ENCODE measurements at regions of chr21 and their contacts with region 1.

Region 1: DNA sequence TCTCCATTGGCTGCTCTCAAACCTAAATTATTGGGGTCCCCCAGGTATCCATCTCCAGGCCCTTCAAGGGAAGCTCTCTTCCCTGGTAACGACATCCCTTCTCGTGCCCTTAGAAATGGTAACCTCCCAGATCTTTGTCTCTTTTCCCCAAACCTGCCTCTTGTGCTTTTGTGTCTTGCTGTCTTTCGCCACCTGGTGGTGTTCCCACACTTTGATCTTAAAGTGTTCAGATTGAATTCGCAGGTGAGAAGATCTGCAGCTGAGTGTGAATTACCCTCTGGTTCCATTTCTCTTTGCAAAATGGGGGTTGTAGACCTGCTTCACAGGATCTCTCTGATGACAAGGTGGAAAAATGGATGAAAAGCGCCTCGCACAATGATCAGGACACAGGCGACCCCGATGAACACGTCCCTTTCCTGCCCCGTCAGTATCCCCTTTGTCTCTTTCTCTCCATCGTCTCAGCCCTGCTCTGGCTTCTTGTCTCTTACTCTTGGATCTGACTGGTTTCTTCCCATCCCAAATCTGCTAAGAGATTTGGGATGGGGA is 53.1 kb downstream of the DOP1B start:
- DNase-seq: no peak
- H3K4me3 ChIP-seq: no peak overlapping the region
- CTCF ChIP-seq: peak; percentile 48

Region 2: DNA sequence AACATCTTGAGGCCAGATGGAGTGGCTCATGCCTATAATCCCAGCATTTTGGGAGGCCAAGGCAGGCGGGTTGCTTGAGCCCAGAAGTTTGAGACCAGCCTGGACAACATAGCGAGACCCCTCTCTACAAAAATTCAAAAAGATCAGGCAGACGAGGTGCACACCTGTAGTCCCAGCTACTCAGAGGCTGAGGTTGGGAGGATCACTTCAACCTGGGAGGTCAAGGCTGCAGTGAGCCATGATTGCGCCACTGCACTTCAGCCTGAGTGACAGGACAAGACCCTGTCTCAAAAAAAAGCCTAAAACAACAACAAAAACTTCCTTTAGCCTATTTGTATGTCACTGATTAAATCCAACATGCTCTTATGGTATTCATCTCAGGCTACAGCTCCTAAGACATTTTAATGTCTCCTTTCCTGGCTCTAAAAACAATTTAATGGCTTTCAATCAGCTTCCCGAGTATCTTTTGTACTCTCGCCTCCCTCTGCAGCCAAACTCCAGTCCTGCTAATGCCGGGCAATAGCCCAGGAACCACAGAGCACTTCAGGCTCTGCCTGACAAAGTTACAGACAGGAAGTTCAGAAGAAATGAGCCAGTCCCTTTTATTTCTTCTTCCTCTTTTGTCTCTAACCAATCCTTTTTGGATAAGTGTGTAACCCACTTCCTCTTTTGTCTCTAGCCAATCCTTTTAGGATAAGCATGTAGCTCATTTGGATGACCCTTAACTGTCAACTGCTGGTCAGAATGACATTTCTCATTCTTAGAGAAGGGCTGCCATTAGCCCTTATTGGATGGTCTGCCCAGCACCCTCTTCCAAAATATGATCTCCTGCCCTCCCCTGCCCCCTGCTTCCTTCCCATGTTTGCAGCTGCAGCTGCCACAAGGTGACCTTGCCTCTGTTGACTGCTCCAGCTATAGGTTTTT is 59.6 kb before region 1 on chr21:
- CTCF ChIA-PET with region 1: interaction called, 99 read pairs
- POLR2A ChIA-PET with region 1: no interaction called
- DNase-seq: no peak
- H3K4me3 ChIP-seq: no peak overlapping the region
- CTCF ChIP-seq: no peak